CD8-positive, alpha-beta T cell (primary cell): ENCODE measurements at regions of chr3 and their contacts with region 1.

Region 1: DNA sequence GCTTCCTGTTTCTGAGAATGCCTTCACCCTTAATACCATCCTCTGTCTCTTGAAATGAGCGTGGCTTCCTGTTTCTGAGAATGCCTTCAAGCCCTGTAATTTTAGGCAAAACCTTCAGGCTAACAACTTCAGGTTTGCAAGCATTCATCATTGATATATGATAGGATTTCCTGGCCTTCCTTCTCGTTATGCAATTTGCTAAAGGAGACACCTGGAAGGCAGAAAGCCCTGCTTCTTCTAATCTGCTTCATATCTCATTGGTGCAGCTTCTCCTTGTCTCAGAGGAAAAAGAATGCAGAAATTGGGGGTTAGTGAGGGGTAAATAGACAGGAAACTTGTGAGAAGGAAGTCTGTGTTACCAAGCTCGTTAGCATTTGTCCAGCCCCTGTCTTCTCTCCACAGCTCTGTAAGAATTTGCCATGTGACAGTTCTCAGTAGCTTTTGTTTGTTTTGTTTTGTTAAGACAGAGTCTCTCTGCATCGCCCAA is 7.3 kb downstream of the ARL6IP5 start:
- DNase-seq: peak in 3 of 9 experiments; percentile 26 to 77 (median 53)
- ATAC-seq: peak; percentile 71
- H3K4me3 ChIP-seq: peak overlapping the region; percentile 13 to 34
- H3K4me3 Mint-ChIP-seq: peak overlapping the region; percentile 73
- H3K27ac ChIP-seq: peak overlapping the region; percentile 50 to 85
- H3K27ac Mint-ChIP-seq: peak overlapping the region; percentile 94
- H3K4me1 ChIP-seq: peaks cover 89% of the 10 kb centered on the region
- H3K4me1 Mint-ChIP-seq: peaks cover 92% of the 10 kb centered on the region
- H3K27me3 ChIP-seq: no peaks in the 10 kb centered on the region
- H3K27me3 Mint-ChIP-seq: no peaks in the 10 kb centered on the region
- CTCF ChIP-seq: no peak

Region 2: DNA sequence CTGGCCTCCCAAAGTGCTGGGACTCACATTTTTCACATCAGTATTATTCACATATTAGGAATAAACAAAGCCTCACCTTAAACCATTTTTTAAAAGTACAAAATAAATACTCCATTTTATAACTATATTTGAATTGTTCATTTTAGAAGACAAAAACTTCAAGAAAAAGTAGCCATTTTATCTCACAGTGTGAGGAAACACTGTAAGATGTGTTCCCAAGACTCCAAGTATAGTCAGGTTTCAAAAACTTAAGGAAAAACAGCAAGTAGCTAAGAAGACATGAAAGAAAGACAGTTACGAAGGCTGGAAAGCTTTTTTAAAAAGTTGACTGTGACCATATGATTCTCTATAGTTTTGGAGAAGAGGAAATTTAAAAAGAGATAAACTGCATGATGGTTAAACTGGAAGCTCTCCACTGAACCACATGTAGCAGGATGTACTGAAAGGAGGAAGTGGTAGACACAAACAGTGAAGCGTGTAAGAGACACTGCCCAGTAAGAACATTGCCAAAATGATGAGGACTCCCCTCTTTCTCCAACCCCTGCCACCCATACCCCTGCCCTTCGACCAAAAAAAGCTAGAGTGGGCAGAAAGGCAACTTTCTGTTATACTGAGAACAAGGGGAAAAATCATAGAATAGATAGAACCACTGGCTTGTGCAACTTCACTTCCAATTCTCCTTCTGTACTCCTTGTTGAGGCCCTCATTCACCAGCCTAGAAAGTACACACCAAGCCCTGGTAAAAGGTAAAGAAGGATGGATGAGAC is 33.7 kb before region 1 on chr3:
- CTCF ChIA-PET with region 1: no interaction called
- POLR2A ChIA-PET with region 1: interaction called, 11 read pairs
- intact Hi-C with region 1: loop called in 1 of 2 experiments (anchors 5 kb)
- DNase-seq: peak in 2 of 9 experiments; percentile 51 to 70
- ATAC-seq: peak; percentile 96
- H3K4me3 ChIP-seq: no peak overlapping the region
- H3K4me3 Mint-ChIP-seq: peak overlapping the region; percentile 33
- H3K27ac ChIP-seq: peak overlapping the region; percentile 56 to 72
- H3K27ac Mint-ChIP-seq: peak overlapping the region; percentile 90
- H3K4me1 ChIP-seq: peaks cover 22% of the 10 kb centered on the region
- H3K4me1 Mint-ChIP-seq: peaks cover 23% of the 10 kb centered on the region
- H3K27me3 ChIP-seq: no peaks in the 10 kb centered on the region
- H3K27me3 Mint-ChIP-seq: no peaks in the 10 kb centered on the region
- CTCF ChIP-seq: no peak